Activated T-helper 1 cell treated with anti-CD3 and anti-CD28 coated beads, Interleukin-12 subunit alpha, Interleukin-12 subunit beta, Interleukin-2, Interleukin-4 antibody, amounts not matched to agents 30 ng/mL and 10 ng/mL and 1 ng/mL, durations not matched to agents 14 hours and 24 hours and 36 hours (primary cell): ENCODE measurements at regions of chr16 and their contacts with region 1.

Region 1: GRCh38 chr16:69565671-69566239 is at the start of gene NFAT5:
- DNase-seq: peak; percentile 90
- H3K4me3 Mint-ChIP-seq: peak within 1 kb of the TSS; percentile 100
- H3K27ac Mint-ChIP-seq: peak within 1 kb of the TSS; percentile 99
- H3K4me1 Mint-ChIP-seq: peaks cover 69% of the 10 kb centered on the region
- H3K27me3 Mint-ChIP-seq: no peaks in the 10 kb centered on the region
- total RNA-seq, gene NFAT5: 54.2 and 54.4 TPM in 2 replicates

Region 2: GRCh38 chr16:69166221-69166833 is 399.4 kb before region 1 on chr16:
- intact Hi-C with region 1: loop called (anchors 10 kb)
- DNase-seq: peak; percentile 46
- H3K4me3 Mint-ChIP-seq: peak overlapping the region; percentile 69
- H3K27ac Mint-ChIP-seq: peak overlapping the region; percentile 89
- H3K4me1 Mint-ChIP-seq: peaks cover 49% of the 10 kb centered on the region
- H3K27me3 Mint-ChIP-seq: no peaks in the 10 kb centered on the region

Region 3: DNA sequence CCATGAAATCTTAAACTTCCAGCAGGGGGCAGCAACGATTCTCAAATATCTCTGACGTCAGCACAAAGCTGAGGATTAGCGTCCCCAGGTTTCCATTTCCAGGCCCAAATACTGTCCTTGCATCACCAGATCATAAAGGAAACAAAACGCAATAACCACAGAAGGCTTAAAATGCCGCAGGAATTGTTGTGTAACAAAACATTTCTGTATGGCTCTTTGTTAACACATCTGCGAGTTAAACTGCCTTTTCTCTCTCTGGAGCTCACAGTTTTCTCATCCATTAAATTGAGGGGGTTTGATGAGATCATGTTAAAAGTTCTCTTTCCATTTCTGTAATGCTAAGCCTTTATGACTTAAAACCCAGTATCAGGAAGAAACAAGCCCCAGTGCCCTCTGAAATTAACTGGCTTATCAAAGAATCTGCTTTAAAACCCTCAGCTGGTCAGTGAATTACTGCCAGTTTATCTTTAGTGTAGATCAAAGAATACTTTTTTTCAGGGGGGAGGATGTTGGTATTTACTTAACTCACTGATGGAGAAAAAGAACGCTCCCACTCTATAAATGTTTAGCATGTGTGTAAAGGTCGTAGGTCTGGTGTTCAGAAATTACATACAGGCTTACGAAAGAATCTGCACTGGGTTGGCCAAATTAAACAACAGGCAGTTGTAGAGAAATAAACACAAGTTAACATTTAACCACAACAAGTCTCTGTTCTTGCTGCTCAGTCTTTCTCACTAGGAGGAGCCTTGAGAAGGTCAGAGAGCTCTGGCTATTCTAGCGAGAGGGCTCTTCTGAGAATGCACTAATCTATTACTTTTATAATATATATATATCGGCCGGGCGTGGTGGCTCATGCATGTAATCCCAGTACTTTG is 169.3 kb before region 1 on chr16:
- intact Hi-C with region 1: loop called (anchors 1 kb)
- DNase-seq: peak; percentile 60
- H3K4me3 Mint-ChIP-seq: no peak overlapping the region
- H3K27ac Mint-ChIP-seq: peak overlapping the region; percentile 18
- H3K4me1 Mint-ChIP-seq: peaks cover 17% of the 10 kb centered on the region
- H3K27me3 Mint-ChIP-seq: peaks cover 5% of the 10 kb centered on the region

Region 4: DNA sequence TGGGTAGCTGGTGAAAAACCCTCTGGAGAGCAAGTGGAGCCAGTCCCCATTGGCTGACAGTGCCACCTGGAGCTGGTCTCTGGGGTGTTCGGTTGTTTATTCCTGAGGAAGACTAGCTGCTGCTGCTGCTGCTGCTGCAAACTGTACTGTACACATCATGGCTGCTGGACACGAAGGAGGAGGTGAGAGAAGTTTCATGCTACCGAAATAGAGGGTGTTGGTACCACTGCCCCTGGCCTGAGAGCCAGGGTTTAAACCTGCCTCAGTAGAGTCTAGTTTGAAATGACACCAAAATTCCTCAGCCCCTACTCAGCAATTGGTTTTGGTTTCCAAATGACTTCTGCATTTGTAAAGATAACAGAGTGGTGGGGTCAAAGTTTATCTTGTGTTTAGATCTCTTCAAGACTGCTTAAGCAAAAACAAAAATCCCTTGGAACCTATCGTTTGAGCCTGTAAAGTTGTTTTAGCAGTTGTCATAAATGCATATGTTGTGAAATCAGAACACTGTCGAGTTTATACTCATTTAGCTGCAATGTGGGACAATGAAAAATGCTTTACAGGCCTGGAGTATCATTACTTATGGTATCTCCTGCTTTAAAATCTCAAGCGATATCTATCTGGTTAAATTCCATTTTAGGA is 100.6 kb before region 1 on chr16:
- intact Hi-C with region 1: loop called (anchors 1 kb)
- DNase-seq: peak; percentile 18
- H3K4me3 Mint-ChIP-seq: peak overlapping the region; percentile 45
- H3K27ac Mint-ChIP-seq: peak overlapping the region; percentile 75
- H3K4me1 Mint-ChIP-seq: peaks cover 55% of the 10 kb centered on the region
- H3K27me3 Mint-ChIP-seq: no peaks in the 10 kb centered on the region

Region 5: DNA sequence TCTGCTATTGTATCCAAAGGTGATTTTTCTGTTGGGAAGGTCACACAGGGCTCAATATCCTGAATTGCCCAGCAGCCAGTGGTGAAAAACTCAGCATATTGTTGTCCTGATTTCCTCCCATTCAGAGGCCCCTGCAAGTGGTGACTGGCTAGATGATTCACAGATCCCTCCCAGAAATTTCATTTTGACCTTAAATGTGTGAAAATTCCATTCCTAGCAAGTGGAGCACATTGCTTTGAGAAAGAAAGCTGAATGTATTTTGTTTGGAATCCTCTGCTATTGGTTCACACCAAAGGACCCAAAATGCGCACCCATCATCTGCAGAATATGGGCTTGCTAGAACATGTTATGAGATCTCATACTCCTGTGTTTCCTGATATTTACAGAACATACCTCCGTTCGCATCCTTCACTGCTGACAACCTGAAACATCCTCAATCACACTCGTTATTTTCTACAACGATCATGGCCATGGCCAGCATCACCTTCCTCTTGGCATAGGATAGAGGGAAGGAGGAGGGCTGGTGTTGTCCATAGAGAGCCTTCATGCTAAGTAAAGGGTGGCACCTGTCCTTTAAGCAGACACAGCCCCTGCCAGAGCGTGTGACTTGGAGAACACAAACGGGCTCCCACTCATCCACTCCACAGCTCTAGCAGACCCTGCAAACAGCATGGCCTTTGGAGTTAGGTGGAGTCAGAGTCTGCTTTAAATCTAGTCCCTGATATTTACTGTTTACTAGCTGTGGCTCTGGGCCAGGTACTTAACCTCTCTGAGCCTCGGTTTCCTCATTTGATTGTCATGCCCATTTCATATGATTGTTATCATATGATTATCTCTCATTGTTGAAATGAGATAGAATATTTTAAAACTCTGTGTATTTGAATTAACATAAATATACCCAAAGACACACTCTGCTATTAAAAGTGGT is 30.4 kb before region 1 on chr16:
- intact Hi-C with region 1: loop called (anchors 1 kb)
- DNase-seq: no peak
- H3K4me3 Mint-ChIP-seq: no peak overlapping the region
- H3K27ac Mint-ChIP-seq: no peak overlapping the region
- H3K4me1 Mint-ChIP-seq: peaks cover 19% of the 10 kb centered on the region
- H3K27me3 Mint-ChIP-seq: no peaks in the 10 kb centered on the region

Region 6: DNA sequence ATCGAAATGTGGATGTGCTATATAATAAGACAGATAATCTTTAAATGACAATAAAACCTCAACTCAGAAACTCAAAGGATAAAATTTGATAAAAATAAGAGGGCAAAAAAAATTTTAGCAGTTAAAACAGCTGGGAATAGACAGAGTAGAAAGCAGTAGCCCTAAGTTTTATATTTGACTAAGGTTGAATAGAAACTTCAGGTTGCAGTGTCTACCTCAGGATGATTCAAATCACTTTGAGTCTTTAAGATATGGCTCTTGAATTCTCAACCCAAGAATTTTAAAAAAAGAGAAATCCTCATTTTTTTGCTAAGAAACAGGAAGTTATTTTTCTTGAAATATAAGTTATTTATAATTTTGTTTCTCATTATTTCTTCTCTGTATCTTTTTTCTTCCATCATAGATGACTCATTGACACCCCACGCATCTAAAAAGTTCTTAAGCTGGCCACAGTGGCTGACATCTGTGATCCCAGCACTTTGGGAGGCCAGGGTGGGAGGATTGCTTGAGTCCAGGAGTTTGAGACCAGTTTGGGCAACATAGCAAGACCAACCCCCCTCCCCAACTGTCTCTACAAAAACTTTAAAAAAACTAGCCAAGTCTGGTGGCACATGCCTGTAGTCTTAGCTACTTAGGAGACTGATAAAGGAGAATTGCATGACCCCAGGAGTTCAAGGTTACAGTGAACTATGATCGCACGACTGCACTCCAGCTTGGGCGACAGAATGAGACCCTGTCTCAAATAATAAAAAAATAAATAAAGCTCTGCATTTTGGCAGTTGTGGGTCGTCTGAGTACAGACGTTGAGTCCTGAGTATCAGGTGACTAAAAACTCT is 23.9 kb after region 1 on chr16:
- intact Hi-C with region 1: no loop called
- DNase-seq: no peak
- H3K4me3 Mint-ChIP-seq: no peak overlapping the region
- H3K27ac Mint-ChIP-seq: peak overlapping the region; percentile 74
- H3K4me1 Mint-ChIP-seq: peaks cover 42% of the 10 kb centered on the region
- H3K27me3 Mint-ChIP-seq: no peaks in the 10 kb centered on the region

Region 7: GRCh38 chr16:69709456-69710084 is 143.8 kb after region 1 on chr16:
- intact Hi-C with region 1: loop called (anchors 5 kb)
- DNase-seq: no peak
- H3K4me3 Mint-ChIP-seq: no peak overlapping the region
- H3K27ac Mint-ChIP-seq: no peak overlapping the region
- H3K4me1 Mint-ChIP-seq: peaks cover 7% of the 10 kb centered on the region
- H3K27me3 Mint-ChIP-seq: no peaks in the 10 kb centered on the region

Region 8: DNA sequence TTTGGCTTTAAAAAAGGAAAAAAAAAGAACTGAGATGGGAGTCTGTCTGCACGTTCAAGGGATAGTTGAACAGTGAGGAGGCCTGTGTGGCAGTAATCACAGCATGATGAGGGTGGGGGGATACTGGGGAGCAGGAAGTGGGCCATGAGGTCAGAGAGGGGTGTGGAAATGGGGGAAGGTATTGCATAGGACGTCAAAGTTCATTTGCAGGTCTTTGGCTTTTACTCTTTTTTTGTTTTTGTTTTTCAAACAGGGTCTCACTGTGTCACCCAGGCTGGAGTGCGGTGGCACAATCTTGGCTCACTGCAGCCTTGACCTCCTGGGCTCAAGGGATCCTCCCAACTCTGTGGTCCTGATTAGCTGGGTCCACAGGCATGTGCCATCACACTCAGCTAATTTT is 215.4 kb after region 1 on chr16:
- intact Hi-C with region 1: no loop called
- DNase-seq: no peak
- H3K4me3 Mint-ChIP-seq: no peak overlapping the region
- H3K27ac Mint-ChIP-seq: no peak overlapping the region
- H3K4me1 Mint-ChIP-seq: no peaks in the 10 kb centered on the region
- H3K27me3 Mint-ChIP-seq: no peaks in the 10 kb centered on the region